ENCODE measurements at regions of chr4 and their contacts with region 1.

Region 1: DNA sequence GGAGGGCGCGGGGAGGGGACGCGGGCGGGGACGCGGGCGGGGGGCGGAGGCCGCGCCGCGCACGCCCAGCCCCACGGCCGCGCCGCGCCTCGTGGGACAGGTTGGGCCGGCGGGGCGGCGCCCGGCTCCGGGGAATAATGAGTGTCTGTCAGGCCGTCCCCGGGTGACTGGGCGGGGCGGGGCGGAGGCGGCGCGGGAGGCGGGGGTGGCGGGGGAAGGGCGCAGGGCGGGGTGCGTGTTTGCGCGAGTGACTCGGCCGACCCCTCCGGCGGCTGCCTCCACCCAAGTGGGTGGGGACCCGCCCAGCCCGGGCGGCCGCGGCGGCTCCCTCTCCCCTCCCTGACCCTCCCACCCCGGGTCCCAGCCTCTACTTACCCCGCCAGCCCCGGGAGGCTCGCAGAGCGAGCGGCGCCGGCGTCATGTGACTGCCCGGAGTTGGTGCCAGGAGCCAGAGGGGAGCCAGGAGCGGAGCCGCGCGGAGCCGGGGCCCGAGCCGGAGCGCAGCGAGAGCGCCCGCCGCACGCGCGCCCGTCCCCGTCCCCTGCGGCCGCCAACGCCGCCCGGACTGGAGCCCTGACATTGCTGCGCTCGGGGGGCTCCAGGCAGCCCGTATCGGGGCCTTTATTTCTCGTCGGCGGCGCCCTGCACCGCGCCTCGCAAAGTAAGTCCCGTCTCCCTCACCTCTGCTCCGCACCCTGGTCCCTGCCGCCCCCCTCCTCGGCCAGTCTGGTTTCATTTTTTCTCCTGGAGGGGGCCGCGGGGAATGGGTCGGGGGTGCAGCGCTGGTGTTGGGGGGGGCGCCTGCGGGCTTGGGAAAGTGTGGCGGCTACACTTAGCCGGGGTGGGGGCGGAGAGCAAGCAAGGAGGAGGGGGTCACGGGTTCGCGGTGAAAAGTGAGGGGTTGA is at the start of gene KLF3:
- DNase-seq: no peak
- ATAC-seq: peak; percentile 82
- H3K4me3 Mint-ChIP-seq: peak within 1 kb of the TSS; percentile 84
- H3K27ac Mint-ChIP-seq: peak within 1 kb of the TSS; percentile 88
- H3K4me1 Mint-ChIP-seq: peaks cover 67% of the 10 kb centered on the region
- H3K27me3 Mint-ChIP-seq: no peaks in the 10 kb centered on the region
- CTCF ChIP-seq: no peak
- total RNA-seq, gene KLF3: 14.5 and 15.9 TPM in 2 replicates

Region 2: GRCh38 chr4:37686373-37687193 is 977.5 kb before region 1 on chr4 and contains the start of gene RELL1:
- CTCF ChIA-PET with region 1: no interaction called
- POLR2A ChIA-PET with region 1: no interaction called
- intact Hi-C with region 1: loop called (anchors 1 kb)
- DNase-seq: peak; percentile 95
- ATAC-seq: peak; percentile 86
- H3K4me3 Mint-ChIP-seq: peak within 1 kb of the TSS; percentile 97
- H3K27ac Mint-ChIP-seq: peak within 1 kb of the TSS; percentile 80
- H3K4me1 Mint-ChIP-seq: peaks cover 41% of the 10 kb centered on the region
- H3K27me3 Mint-ChIP-seq: peaks cover 8% of the 10 kb centered on the region
- CTCF ChIP-seq: no peak
- total RNA-seq, gene RELL1: 0.71 and 1.0 TPM in 2 replicates

Region 3: DNA sequence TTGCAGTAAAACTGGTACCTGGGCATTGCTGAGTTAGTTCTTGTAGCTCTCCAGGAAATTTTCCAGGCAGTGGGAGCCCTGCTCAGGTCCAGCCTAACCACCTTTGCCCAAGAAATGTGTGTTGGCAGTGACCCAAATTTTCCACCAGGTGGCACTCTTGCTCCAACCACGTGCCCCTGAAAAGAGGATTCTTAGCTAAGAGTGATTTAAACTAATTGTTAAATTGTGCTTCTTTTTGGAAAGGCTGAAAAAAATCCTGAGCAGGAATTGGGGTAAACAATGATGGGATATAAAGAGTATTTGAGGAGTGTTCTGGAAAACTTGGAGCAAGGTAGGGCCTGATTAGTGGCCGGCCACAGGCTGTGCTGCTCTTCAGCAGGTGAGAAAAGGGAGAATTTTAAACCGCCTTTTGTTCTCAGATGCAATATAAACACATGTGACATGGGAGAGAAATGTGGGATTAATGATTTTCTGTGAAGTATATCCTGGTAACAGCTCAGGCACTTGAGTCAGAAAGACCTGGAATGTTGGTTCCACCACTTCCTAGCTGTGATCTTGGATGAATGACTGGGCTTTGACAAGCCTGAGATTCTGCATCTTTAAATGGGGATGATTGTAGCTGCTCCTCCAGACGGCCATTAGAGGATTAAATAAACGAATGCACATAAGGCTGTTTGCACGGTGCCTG is 484.2 kb before region 1 on chr4:
- CTCF ChIA-PET with region 1: interaction called, 56 read pairs
- POLR2A ChIA-PET with region 1: interaction called, 5 read pairs
- intact Hi-C with region 1: no loop called
- DNase-seq: peak; percentile 54
- ATAC-seq: peak; percentile 75
- H3K4me3 Mint-ChIP-seq: no peak overlapping the region
- H3K27ac Mint-ChIP-seq: peak overlapping the region; percentile 15
- H3K4me1 Mint-ChIP-seq: peaks cover 28% of the 10 kb centered on the region
- H3K27me3 Mint-ChIP-seq: peaks cover 6% of the 10 kb centered on the region
- CTCF ChIP-seq: peak; percentile 96

Region 4: DNA sequence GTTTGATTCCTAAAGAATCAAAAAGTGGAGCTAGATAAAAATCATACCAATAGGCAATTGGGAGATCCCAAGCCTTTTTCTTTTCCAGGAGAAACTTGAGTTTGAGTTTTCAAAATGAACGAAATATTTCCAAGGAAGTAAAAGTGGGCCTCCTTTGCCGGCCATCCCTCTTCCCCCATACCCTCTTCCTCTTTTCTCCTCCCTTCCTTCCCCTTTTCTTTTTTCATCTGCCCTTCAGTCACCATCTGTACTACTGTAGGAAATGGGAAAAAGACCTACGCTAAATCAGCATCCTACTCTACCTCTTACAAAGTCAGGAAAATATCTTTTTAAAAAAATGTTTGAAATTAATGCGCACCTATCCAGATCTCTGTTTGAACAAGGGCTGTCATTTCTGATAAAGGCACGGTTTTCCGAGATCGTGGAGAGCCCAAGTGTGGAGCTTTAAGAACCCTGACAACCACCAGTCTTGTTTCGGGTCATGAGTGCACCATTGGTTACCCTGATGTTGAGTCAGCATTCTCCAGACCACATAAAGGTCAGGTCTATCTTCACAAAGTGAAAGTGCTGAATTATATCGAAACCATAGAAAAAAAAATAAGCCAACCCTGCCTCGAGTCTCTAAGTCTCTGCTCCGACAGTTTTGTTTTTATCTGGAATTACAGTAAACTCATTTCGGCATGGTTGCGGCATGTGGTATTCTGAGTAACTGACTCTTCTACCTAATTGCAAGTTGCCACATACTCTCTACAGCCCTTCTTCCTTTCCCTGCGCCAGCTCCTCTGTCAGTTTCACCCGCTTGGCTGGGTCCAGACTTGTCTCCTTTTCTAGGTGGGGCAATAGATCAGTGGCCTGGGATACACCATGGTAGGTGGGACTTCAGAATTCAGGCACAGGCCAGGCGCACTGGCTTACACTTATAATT is 140.3 kb before region 1 on chr4:
- CTCF ChIA-PET with region 1: no interaction called
- POLR2A ChIA-PET with region 1: interaction called, 3 read pairs
- intact Hi-C with region 1: loop called (anchors 5 kb)
- DNase-seq: no peak
- ATAC-seq: peak; percentile 91
- H3K4me3 Mint-ChIP-seq: peak overlapping the region; percentile 47
- H3K27ac Mint-ChIP-seq: no peak overlapping the region
- H3K4me1 Mint-ChIP-seq: peaks cover 8% of the 10 kb centered on the region
- H3K27me3 Mint-ChIP-seq: peaks cover 2% of the 10 kb centered on the region
- CTCF ChIP-seq: no peak

Region 5: DNA sequence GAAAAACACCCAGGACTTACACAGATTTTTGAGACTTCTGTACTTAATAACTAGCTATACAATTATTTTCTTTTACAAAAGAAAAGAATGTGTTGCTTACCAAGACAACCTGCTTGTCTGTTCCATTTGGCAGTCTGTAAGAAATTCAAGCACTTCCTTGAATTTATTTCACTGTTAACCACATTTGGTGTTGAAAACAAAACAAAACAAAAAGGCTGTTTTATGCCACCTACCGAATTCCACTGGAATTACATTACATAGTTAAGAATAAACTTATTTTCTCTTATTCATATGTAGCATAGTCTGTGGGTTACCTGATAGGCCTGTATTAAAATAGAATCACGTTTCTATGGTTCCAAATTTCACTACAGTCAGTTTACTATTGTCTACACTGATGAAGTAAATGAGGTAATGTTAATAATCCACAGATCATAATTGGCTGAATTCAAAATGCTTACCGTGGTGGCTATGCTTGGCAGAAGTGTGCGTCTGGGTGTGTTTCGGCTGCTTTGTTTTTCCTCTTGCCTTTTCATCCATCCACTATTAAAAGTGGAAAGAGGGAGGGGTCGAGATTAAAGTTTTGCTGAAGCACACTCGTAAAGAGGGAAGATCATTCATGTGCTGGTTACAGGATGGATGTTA is 140.7 kb after region 1 on chr4 and contains the start of gene TLR1:
- CTCF ChIA-PET with region 1: interaction called, 4 read pairs
- POLR2A ChIA-PET with region 1: no interaction called
- intact Hi-C with region 1: loop called (anchors 2 kb)
- DNase-seq: no peak
- ATAC-seq: peak; percentile 45
- H3K4me3 Mint-ChIP-seq: peak within 1 kb of the TSS; percentile 86
- H3K27ac Mint-ChIP-seq: peak within 1 kb of the TSS; percentile 93
- H3K4me1 Mint-ChIP-seq: peaks cover 68% of the 10 kb centered on the region
- H3K27me3 Mint-ChIP-seq: no peaks in the 10 kb centered on the region
- CTCF ChIP-seq: peak; percentile 54
- total RNA-seq, gene TLR1: 39.6 and 43.0 TPM in 2 replicates

Region 6: GRCh38 chr4:39458505-39459300 is 794.6 kb after region 1 on chr4 and contains the starts of genes LIAS and RPL9:
- CTCF ChIA-PET with region 1: no interaction called
- POLR2A ChIA-PET with region 1: no interaction called
- intact Hi-C with region 1: loop called (anchors 10 kb)
- DNase-seq: peak; percentile 90
- ATAC-seq: peak; percentile 81
- H3K4me3 Mint-ChIP-seq: peak within 1 kb of the TSS; percentile 97
- H3K27ac Mint-ChIP-seq: peak within 1 kb of the TSS; percentile 98
- H3K4me1 Mint-ChIP-seq: peaks cover 36% of the 10 kb centered on the region
- H3K27me3 Mint-ChIP-seq: no peaks in the 10 kb centered on the region
- CTCF ChIP-seq: no peak
- total RNA-seq, gene LIAS: 19.5 and 20.5 TPM in 2 replicates
- total RNA-seq, gene RPL9: 2,632 and 2,865 TPM in 2 replicates

Measured in activated B cell treated with CpG ODN at 0.5 μM for 24 hours (primary cell).